ENCODE measurements at regions of chr1 and their contacts with region 1.

Region 1: DNA sequence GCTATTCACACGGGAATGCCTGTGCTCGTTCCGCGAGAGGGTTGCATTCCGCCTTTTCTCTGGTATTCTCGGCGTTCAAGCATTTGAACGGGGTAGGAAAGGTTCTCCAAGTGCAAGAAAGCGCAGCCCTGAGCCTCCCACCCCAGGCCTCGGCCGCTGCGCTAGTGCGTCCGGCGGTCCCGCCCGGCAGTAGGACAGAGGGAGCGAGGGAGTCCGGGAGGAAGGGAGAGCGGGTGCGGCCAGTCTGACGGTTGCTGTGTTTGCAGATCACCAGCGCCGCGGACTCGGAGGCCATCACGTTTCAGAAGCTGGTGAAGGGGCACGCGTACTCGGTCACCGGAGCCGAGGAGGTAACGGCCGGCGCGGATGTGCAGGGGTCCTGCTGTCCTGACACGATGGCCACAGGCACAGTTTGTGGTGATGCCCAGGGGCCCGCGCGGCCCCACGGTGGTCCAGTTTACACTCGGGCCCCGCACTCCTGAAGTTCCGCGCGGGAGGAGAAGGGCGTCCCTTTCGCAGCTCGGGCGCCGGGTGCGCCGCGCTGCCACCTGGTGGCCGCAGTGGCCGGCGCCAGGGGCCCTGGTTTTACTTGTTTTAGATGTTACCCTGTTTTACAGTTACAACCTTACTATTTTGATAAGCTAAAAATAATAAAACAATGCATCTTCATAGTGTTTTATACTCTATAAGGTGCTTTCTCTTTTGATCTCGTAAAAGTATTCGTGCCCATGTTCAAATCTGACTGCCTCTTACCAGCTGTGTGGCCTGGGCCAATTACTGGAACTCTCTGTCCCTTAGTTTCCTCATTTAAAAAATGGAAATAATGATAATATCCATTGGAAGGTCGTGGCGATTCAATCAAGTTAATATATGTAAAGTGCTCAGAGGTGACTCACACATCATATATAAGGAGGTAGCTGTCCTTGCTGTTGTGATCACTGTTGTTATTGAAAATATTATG is 36.7 kb downstream of the CAPN2 start:
- DNase-seq: peak; percentile 64
- H3K4me3 Mint-ChIP-seq: peak overlapping the region; percentile 49
- H3K27ac Mint-ChIP-seq: peak overlapping the region; percentile 72
- H3K4me1 Mint-ChIP-seq: peaks cover 23% of the 10 kb centered on the region
- H3K27me3 Mint-ChIP-seq: no peaks in the 10 kb centered on the region

Region 2: GRCh38 chr1:223700942-223701637 is 48.0 kb before region 1 on chr1:
- CTCF ChIA-PET with region 1: interaction called, 43 read pairs
- POLR2A ChIA-PET with region 1: no interaction called
- DNase-seq: no peak
- H3K4me3 Mint-ChIP-seq: no peak overlapping the region
- H3K27ac Mint-ChIP-seq: no peak overlapping the region
- H3K4me1 Mint-ChIP-seq: peaks cover 22% of the 10 kb centered on the region
- H3K27me3 Mint-ChIP-seq: peaks cover 5% of the 10 kb centered on the region

Region 3: DNA sequence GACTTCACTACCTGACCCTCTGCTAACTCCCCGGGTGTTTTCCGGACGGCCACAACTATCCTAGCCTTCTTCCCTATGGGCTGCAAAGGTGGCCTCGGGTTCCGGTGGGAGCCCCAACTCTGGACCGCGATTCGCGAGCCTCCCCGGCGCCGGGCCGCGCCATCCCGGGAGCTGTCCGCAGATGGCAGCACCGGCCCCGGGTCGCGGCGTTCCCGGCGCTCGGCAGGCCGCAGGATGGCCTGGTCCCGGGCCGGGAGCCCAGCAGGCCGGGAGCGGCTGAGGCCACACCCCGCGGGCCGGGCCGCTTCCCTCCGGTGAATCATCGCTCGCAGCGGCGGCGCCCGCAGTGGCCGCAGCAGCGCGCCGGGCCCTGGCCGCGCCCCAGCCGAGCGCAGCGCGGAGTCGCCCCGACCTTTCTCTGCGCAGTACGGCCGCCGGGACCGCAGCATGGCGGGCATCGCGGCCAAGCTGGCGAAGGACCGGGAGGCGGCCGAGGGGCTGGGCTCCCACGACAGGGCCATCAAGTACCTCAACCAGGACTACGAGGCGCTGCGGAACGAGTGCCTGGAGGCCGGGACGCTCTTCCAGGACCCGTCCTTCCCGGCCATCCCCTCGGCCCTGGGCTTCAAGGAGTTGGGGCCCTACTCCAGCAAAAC is 36.7 kb before region 1 on chr1 and contains the start of gene CAPN2:
- CTCF ChIA-PET with region 1: interaction called, 31 read pairs
- POLR2A ChIA-PET with region 1: no interaction called
- DNase-seq: peak; percentile 53
- H3K4me3 Mint-ChIP-seq: peak within 1 kb of the TSS; percentile 78
- H3K27ac Mint-ChIP-seq: peak within 1 kb of the TSS; percentile 87
- H3K4me1 Mint-ChIP-seq: peaks cover 67% of the 10 kb centered on the region
- H3K27me3 Mint-ChIP-seq: peaks cover 1% of the 10 kb centered on the region
- total RNA-seq, gene CAPN2: 206 to 207 TPM

Region 4: GRCh38 chr1:223726380-223727001 is 22.6 kb before region 1 on chr1:
- CTCF ChIA-PET with region 1: interaction called, 13 read pairs
- POLR2A ChIA-PET with region 1: no interaction called
- DNase-seq: peak; percentile 88
- H3K4me3 Mint-ChIP-seq: peak overlapping the region; percentile 72
- H3K27ac Mint-ChIP-seq: peak overlapping the region; percentile 88
- H3K4me1 Mint-ChIP-seq: peaks cover 79% of the 10 kb centered on the region
- H3K27me3 Mint-ChIP-seq: no peaks in the 10 kb centered on the region

Region 5: GRCh38 chr1:223738465-223739365 is 10.3 kb before region 1 on chr1:
- CTCF ChIA-PET with region 1: interaction called, 13 read pairs
- POLR2A ChIA-PET with region 1: no interaction called
- DNase-seq: no peak
- H3K4me3 Mint-ChIP-seq: no peak overlapping the region
- H3K27ac Mint-ChIP-seq: no peak overlapping the region
- H3K4me1 Mint-ChIP-seq: peaks cover 18% of the 10 kb centered on the region
- H3K27me3 Mint-ChIP-seq: no peaks in the 10 kb centered on the region

Region 6: DNA sequence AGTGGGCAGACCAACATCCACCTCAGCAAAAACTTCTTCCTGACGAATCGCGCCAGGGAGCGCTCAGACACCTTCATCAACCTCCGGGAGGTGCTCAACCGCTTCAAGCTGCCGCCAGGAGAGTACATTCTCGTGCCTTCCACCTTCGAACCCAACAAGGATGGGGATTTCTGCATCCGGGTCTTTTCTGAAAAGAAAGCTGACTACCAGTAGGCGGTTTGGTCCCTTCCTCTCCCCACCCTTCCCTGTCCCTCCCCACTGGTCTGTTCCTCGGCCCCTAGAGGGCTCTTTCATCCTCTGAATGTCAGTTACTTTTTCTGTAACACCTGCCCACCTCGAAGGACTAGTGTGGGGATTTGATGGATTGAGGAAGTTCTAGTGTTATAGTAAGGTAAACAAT is 10.2 kb after region 1 on chr1:
- CTCF ChIA-PET with region 1: interaction called, 25 read pairs
- POLR2A ChIA-PET with region 1: interaction called, 6 read pairs
- DNase-seq: no peak
- H3K4me3 Mint-ChIP-seq: no peak overlapping the region
- H3K27ac Mint-ChIP-seq: no peak overlapping the region
- H3K4me1 Mint-ChIP-seq: no peaks in the 10 kb centered on the region
- H3K27me3 Mint-ChIP-seq: no peaks in the 10 kb centered on the region

Region 7: DNA sequence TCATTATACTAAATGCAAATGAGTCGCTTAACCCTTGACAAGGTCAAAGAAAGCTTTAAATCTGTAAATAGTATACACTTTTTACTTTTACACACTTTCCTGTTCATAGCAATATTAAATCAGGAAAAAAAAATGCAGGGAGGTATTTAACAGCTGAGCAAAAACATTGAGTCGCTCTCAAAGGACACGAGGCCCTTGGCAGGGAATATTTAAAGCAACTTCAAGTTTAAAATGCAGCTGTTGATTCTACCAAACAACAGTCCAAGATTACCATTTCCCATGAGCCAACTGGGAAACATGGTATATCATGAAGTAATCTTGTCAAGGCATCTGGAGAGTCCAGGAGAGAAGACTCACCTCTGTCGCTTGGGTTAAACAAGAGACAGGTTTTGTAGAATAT is 26.0 kb after region 1 on chr1:
- CTCF ChIA-PET with region 1: interaction called, 13 read pairs
- POLR2A ChIA-PET with region 1: no interaction called
- DNase-seq: no peak
- H3K4me3 Mint-ChIP-seq: no peak overlapping the region
- H3K27ac Mint-ChIP-seq: no peak overlapping the region
- H3K4me1 Mint-ChIP-seq: peaks cover 29% of the 10 kb centered on the region
- H3K27me3 Mint-ChIP-seq: no peaks in the 10 kb centered on the region

Region 8: DNA sequence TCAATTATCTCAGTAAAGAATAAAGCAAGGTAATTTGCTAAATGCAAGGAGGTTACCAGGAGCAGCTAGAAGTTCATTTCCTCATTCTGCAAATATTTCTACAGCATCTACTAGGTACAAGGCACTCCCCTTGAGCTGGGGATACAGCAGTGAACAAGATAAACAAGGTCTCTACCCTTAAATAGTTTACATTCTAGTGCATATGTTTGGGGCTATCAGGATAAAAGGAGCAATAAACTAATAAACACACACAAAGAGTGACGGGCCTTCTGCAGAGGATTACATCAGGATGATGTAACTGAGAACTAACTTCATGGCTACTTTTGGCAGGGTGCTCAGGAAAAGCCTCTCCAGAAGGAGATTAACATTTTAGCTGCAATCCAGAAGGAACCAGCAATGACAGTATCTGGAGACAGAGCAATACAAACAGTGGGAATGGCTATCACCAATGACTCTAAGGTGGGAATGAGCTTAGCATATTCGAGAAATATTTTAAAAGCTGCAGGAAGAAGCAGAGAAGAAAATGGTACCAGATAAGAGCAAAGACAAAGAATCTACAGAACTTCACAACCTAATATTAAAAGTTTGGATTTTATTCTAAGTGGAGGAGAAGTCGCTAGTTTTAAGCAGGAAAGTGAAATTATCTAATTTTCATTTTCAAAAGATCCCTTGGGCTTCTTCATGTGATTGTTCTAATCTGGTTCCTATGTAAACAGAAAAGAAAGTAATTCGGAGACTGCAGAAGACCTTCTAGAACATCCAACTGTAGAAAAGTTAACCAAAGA is 70.9 kb after region 1 on chr1:
- CTCF ChIA-PET with region 1: no interaction called
- POLR2A ChIA-PET with region 1: no interaction called
- DNase-seq: no peak
- H3K4me3 Mint-ChIP-seq: no peak overlapping the region
- H3K27ac Mint-ChIP-seq: no peak overlapping the region
- H3K4me1 Mint-ChIP-seq: peaks cover 26% of the 10 kb centered on the region
- H3K27me3 Mint-ChIP-seq: no peaks in the 10 kb centered on the region